Activated CD4-positive, alpha-beta T cell treated with anti-CD3 and anti-CD28 coated beads for 36 hours (primary cell): ENCODE measurements at regions of chr6 and their contacts with region 1.

Region 1: GRCh38 chr6:169789982-169790927 is 38.8 kb downstream of the ERMARD start:
- DNase-seq: peak; percentile 88
- ATAC-seq: peak; percentile 96
- H3K4me3 Mint-ChIP-seq: peak overlapping the region; percentile 77
- H3K27ac Mint-ChIP-seq: peak overlapping the region; percentile 67
- H3K4me1 Mint-ChIP-seq: peaks cover 18% of the 10 kb centered on the region
- H3K27me3 Mint-ChIP-seq: peaks cover 12% of the 10 kb centered on the region

Region 2: DNA sequence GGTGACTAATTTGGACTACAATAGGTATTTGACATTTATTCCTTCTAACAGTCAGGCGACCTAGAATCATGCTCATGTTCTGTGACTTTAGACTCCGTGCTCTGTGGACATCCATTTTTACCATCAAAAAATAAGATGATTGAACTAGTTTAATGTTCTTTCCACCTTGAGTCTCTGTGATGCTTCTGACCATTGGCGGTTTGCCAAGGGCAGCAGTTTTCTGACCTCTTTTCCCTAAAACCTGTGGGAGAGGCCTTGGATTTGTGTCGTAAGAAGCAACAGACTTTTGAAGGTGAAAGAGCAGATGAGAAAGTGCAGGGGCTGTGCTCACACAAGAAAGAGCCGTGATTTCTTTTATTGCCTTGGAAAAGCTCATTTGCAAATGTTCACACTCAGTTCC is 21.4 kb before region 1 on chr6:
- CTCF ChIA-PET with region 1: interaction called, 13 read pairs
- POLR2A ChIA-PET with region 1: no interaction called
- intact Hi-C with region 1: no loop called
- DNase-seq: no peak
- ATAC-seq: no peak
- H3K4me3 Mint-ChIP-seq: no peak overlapping the region
- H3K27ac Mint-ChIP-seq: no peak overlapping the region
- H3K4me1 Mint-ChIP-seq: no peaks in the 10 kb centered on the region
- H3K27me3 Mint-ChIP-seq: no peaks in the 10 kb centered on the region

Region 3: GRCh38 chr6:169930799-169931198 is 140.5 kb after region 1 on chr6:
- CTCF ChIA-PET with region 1: no interaction called
- POLR2A ChIA-PET with region 1: no interaction called
- intact Hi-C with region 1: loop called in 1 of 2 experiments (anchors 2 kb)
- DNase-seq: peak; percentile 23
- ATAC-seq: peak; percentile 30
- H3K4me3 Mint-ChIP-seq: no peak overlapping the region
- H3K27ac Mint-ChIP-seq: no peak overlapping the region
- H3K4me1 Mint-ChIP-seq: no peaks in the 10 kb centered on the region
- H3K27me3 Mint-ChIP-seq: peaks cover 9% of the 10 kb centered on the region

Region 4: DNA sequence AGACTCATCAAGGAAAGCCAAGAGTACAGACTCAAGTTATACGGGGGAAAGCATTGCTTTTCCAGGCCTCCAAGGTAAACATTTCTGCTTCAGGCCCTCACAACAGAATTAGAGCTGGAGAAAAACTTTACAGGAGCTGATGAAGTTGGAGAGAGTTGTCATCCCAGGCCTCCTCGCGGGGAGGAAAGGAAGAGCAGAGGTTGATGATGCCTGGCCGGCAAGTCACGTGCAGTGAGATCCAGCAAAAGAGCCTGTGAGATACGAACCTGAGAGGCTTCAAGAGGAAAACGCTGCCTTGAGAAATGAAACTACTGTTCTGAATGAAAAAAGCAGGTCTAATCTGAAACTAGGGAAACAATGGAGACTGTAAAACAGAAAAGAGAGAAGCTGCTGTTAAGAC is 639.2 kb after region 1 on chr6:
- CTCF ChIA-PET with region 1: no interaction called
- POLR2A ChIA-PET with region 1: no interaction called
- intact Hi-C with region 1: no loop called
- DNase-seq: no peak
- ATAC-seq: no peak
- H3K4me3 Mint-ChIP-seq: no peak overlapping the region
- H3K27ac Mint-ChIP-seq: no peak overlapping the region
- H3K4me1 Mint-ChIP-seq: no peaks in the 10 kb centered on the region
- H3K27me3 Mint-ChIP-seq: peaks cover 8% of the 10 kb centered on the region

Region 5: GRCh38 chr6:170516783-170517616 is 726.7 kb after region 1 on chr6:
- CTCF ChIA-PET with region 1: interaction called, 12 read pairs
- POLR2A ChIA-PET with region 1: no interaction called
- intact Hi-C with region 1: loop called (anchors 1 kb)
- DNase-seq: peak; percentile 59
- ATAC-seq: peak; percentile 97
- H3K4me3 Mint-ChIP-seq: no peak overlapping the region
- H3K27ac Mint-ChIP-seq: no peak overlapping the region
- H3K4me1 Mint-ChIP-seq: no peaks in the 10 kb centered on the region
- H3K27me3 Mint-ChIP-seq: peaks cover 33% of the 10 kb centered on the region